GM12878 (cell line): ENCODE measurements at regions of chr3 and their contacts with region 1.

Region 1: GRCh38 chr3:179811321-179812095 is 158.7 kb downstream of the USP13 start:
- DNase-seq: peak; percentile 40
- ATAC-seq: peak; percentile 94
- H3K4me3 ChIP-seq: no peak overlapping the region
- H3K27ac ChIP-seq: no peak overlapping the region
- H3K4me1 ChIP-seq: no peaks in the 10 kb centered on the region
- H3K27me3 ChIP-seq: no peaks in the 10 kb centered on the region
- CTCF ChIP-seq: peak; percentile 63 to 83 (median 78); a peak in 5 of 6 replicates
- EP300 ChIP-seq: no peak
- POLR2A ChIP-seq: no peak
- RAD21 ChIP-seq: peak; percentile 97

Region 2: DNA sequence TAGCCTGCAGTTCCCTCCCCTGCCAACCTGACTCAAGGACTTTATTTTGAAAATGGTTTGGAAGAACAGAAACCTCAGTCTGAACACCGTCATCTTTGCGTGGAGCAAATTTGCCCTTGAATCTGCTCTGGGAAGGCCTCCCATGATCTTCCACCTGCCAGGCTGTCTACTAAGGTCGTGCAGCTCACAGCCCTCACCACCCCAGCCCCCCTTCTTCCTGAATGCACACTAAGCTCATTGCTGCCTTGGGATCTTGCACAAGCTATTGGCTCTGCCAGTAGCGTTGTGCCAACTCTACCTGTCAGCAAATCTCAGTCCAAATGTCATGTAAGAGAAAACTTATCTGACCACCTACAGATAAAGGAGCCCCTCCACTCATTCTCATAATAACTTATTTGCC is 17.2 kb before region 1 on chr3:
- CTCF ChIA-PET with region 1: interaction called, 10 read pairs
- POLR2A ChIA-PET with region 1: no interaction called
- RAD21 ChIA-PET with region 1: no interaction called
- SMC1A ChIA-PET with region 1: interaction called, 6 read pairs
- in situ Hi-C with region 1: no loop called
- intact Hi-C with region 1: no loop called
- DNase-seq: no peak
- ATAC-seq: no peak
- H3K4me3 ChIP-seq: no peak overlapping the region
- H3K27ac ChIP-seq: no peak overlapping the region
- H3K4me1 ChIP-seq: no peaks in the 10 kb centered on the region
- H3K27me3 ChIP-seq: no peaks in the 10 kb centered on the region
- CTCF ChIP-seq: no peak
- EP300 ChIP-seq: no peak
- POLR2A ChIP-seq: no peak
- RAD21 ChIP-seq: no peak

Region 3: GRCh38 chr3:179852142-179852905 is 40.8 kb after region 1 on chr3:
- CTCF ChIA-PET with region 1: interaction called, 18 read pairs
- POLR2A ChIA-PET with region 1: interaction called, 3 read pairs
- RAD21 ChIA-PET with region 1: interaction called, 16 read pairs
- SMC1A ChIA-PET with region 1: interaction called, 10 read pairs
- in situ Hi-C with region 1: no loop called
- intact Hi-C with region 1: no loop called
- DNase-seq: no peak
- ATAC-seq: peak; percentile 98
- H3K4me3 ChIP-seq: no peak overlapping the region
- H3K27ac ChIP-seq: no peak overlapping the region
- H3K4me1 ChIP-seq: peaks cover 4% of the 10 kb centered on the region; the same call in 1 of the 2 replicates
- H3K27me3 ChIP-seq: no peaks in the 10 kb centered on the region
- CTCF ChIP-seq: peak in 2 of 3 experiments; percentile 12 to 19; a peak in 1 of 6 replicates
- EP300 ChIP-seq: no peak
- POLR2A ChIP-seq: no peak
- RAD21 ChIP-seq: peak; percentile 36; the same call in 1 of the 2 replicates

Region 4: DNA sequence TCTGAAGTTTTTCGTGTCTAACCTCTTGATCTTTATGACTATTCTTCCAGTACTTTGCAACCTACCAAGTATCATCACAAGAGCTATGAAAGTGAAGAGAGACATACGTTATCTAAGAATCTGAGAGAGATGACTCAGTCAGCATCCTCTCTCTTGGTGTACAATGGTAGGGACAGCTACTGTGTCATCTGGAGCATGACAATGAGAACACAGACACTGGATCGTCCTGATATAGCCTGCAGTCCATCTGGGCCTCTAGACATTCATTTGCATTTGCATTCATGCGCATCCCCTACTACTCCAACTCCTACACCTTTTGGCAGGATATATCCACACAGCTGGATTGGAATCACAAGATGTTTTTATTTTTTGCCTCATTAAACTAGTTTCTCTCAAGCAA is 110.0 kb after region 1 on chr3:
- CTCF ChIA-PET with region 1: interaction called, 47 read pairs
- POLR2A ChIA-PET with region 1: no interaction called
- RAD21 ChIA-PET with region 1: interaction called, 35 read pairs
- SMC1A ChIA-PET with region 1: interaction called, 4 read pairs
- in situ Hi-C with region 1: no loop called
- intact Hi-C with region 1: loop called (anchors 2 kb)
- DNase-seq: peak; percentile 25
- ATAC-seq: peak; percentile 98
- H3K4me3 ChIP-seq: no peak overlapping the region
- H3K27ac ChIP-seq: no peak overlapping the region
- H3K4me1 ChIP-seq: no peaks in the 10 kb centered on the region
- H3K27me3 ChIP-seq: no peaks in the 10 kb centered on the region
- CTCF ChIP-seq: no peak
- EP300 ChIP-seq: no peak
- POLR2A ChIP-seq: no peak
- RAD21 ChIP-seq: no peak

Region 5: GRCh38 chr3:180329187-180329586 is 517.7 kb after region 1 on chr3:
- CTCF ChIA-PET with region 1: interaction called, 6 read pairs
- POLR2A ChIA-PET with region 1: no interaction called
- RAD21 ChIA-PET with region 1: no interaction called
- SMC1A ChIA-PET with region 1: interaction called, 4 read pairs
- in situ Hi-C with region 1: no loop called
- intact Hi-C with region 1: loop called (anchors 2 kb)
- DNase-seq: peak; percentile 43
- ATAC-seq: peak; percentile 88
- H3K4me3 ChIP-seq: no peak overlapping the region
- H3K27ac ChIP-seq: peak overlapping the region; percentile 56
- H3K4me1 ChIP-seq: peaks cover 32% of the 10 kb centered on the region
- H3K27me3 ChIP-seq: no peaks in the 10 kb centered on the region
- CTCF ChIP-seq: peak; percentile 26 to 32 (median 29); a peak in 2 of 6 replicates
- EP300 ChIP-seq: peak in 1 of 2 experiments; percentile 21; a peak in 1 of 4 replicates
- POLR2A ChIP-seq: no peak
- RAD21 ChIP-seq: peak; percentile 55

Region 6: GRCh38 chr3:180601688-180602666 is 790.5 kb after region 1 on chr3 and contains the start of gene TTC14:
- CTCF ChIA-PET with region 1: interaction called, 43 read pairs
- POLR2A ChIA-PET with region 1: no interaction called
- RAD21 ChIA-PET with region 1: interaction called, 12 read pairs
- SMC1A ChIA-PET with region 1: interaction called, 12 read pairs
- in situ Hi-C with region 1: loop called (anchors 5 kb)
- intact Hi-C with region 1: no loop called
- DNase-seq: peak; percentile 81
- ATAC-seq: peak; percentile 95
- H3K4me3 ChIP-seq: peak within 1 kb of the TSS; percentile 90
- H3K27ac ChIP-seq: peak within 1 kb of the TSS; percentile 67
- H3K4me1 ChIP-seq: no peaks in the 10 kb centered on the region
- H3K27me3 ChIP-seq: no peaks in the 10 kb centered on the region
- CTCF ChIP-seq: peak in 1 of 3 experiments; percentile 45; a peak in 2 of 6 replicates
- EP300 ChIP-seq: no peak
- POLR2A ChIP-seq: peak; percentile 93
- RAD21 ChIP-seq: peak; percentile 34
- polyA plus RNA-seq, gene TTC14: 14.0 to 22.4 TPM